ENCODE measurements at regions of chr20 and their contacts with region 1.

Region 1: GRCh38 chr20:561437-562231 is 18.0 kb upstream of the CSNK2A1 start:
- DNase-seq: peak; percentile 78
- CTCF ChIP-seq: peak; percentile 91

Region 2: DNA sequence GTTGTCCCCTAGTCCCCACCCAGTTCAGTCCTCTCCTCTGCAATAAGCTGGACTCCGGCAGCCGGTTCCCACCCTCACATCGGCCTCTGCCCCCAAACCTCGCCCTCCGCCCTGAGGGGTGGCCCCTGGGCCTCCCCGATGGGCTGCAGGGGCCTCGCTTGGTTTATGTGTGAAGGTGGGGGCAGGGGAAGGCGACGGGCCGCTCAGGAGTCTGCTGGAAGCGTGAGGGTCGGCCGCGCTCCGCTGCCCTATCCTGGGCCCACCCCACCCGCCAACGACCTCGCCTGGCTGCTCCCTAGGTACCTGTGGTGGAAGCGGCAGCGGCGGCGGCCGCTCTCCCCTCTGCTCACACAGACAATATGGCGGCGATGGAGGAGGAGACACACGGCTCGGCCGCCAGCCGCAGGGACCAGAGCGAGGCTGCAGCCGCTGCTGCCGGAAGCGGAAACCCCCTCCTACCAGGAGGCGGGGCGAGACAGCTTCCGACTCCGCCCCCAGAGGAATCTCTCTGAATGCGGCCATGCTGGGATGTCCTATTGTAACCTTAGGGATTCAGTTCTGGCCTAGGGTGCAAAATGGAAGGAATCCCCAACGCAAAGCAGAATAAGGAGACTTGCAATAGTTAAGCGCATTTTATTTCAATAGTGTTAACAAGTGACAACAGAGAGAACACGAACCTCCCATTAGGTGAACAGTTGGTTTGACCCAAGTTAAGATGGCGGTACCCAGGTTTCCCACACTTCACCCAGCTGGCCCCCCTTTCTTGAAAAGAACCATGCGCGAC is 18.1 kb before region 1 on chr20 and contains the start of gene CSNK2A1:
- CTCF ChIA-PET with region 1: interaction called, 63 read pairs
- POLR2A ChIA-PET with region 1: no interaction called
- DNase-seq: peak; percentile 95
- CTCF ChIP-seq: no peak

Region 3: DNA sequence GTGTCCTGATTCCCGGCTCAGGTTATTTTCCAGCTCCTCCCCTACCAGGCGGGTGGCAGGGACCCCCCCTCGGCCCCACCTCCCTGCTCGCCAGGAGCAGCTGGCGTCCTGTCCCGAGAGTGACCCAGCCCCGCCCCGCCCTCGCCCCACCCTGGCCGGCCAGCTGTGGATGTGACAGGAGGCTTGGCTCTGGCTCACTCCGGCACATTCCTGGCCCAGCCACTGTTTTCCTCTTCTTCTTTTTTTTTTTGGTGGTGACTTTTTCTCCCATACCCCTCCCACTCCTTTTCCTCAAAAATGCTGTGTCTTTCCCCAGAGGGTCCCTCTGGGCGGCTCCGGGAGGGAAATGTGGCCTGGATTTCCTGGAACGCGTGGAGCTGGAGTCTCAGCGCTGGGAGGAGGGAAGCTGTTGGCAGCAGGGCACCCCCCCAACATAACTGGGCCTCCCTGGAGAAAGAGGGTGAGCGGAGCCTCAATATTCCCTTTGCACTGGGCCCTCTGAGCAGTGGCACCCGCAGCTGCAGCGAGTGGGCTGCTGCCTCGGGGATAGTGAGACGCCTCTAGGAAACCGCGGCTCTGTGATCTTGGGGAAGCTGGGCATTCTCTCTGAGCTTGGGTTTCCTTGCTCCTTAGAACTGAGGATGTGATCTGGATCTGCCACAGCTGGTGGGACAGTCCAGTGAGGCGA is 10.3 kb after region 1 on chr20:
- CTCF ChIA-PET with region 1: interaction called, 24 read pairs
- POLR2A ChIA-PET with region 1: no interaction called
- DNase-seq: no peak
- CTCF ChIP-seq: no peak

Region 4: DNA sequence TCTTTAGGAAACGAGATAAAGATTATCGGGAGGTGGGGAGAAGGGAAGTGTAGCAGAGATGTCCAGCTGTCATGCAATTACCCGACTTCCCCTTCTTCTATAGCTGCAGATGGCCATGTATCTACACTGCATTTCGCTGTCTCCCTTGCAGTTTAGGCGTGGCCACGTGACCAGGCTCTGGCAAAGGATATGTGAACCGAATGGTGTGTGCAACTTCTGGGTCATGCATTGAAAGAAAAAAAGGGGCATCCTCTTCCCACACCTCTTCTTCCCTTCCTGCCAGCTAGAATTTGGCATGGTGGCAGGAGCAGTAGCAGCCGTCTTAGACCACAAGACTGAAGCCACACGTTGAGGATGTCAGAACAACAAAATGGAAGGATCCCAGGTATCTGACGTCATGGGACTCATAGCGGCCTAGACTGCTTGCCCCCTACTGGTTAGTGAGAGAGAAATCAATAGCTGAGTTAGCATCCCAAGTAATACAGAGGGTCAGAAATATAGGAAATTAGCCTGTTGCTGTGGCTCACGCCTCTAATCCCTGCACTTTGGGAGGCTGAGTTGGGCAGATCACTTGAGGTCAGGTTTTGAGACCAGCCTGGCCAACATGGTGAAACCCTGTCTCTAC is 15.6 kb after region 1 on chr20:
- CTCF ChIA-PET with region 1: interaction called, 24 read pairs
- POLR2A ChIA-PET with region 1: no interaction called
- DNase-seq: no peak
- CTCF ChIP-seq: no peak

Region 5: DNA sequence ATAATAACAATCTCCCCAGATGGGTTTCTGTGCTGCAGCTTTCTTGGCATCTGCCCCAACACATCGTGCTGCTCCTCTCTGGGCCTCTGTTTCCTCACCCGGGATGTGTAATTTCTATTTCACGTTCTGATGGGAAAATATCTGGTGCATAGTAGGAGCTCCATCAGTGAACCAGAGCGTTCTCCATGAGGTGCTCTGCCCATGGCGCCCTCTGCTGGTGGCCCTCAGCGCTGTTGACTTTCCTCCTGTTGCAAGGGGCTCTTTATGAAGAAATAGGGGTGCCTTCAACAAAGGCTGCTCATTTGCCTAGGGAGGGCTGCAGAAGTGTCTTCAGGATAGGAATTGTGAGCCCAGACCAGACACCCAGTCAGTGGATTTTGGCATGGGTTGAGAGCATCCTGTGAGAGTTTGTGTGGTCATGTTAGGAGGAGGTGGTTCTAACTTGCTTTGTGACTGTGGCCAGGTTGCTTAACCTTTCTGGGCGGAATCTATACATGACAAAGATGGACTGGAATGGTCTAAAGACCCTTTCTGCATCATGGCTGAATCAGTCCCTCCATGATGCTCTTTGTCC is 105.8 kb after region 1 on chr20:
- CTCF ChIA-PET with region 1: interaction called, 35 read pairs
- POLR2A ChIA-PET with region 1: no interaction called
- DNase-seq: peak; percentile 70
- CTCF ChIP-seq: peak; percentile 83

Region 6: DNA sequence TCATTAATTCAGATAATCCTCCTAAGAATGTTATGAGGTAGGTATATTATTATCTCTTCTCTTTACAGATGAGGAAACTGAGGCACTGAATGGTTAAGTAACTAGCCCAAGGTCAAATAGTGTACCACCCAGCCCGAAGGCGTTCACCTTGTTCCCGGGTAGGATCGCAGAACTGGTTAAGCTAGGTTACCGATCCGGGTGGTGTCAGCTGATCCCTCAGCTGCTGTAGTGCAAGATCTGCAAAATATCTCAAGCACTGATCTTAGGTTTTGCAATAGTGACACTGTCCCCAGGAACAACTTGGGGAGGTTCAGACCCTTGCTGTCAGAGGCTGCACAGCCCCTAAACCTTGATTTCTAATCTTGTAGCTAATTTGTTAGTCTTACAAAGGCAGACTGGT is 178.5 kb after region 1 on chr20:
- CTCF ChIA-PET with region 1: interaction called, 16 read pairs
- POLR2A ChIA-PET with region 1: no interaction called
- DNase-seq: no peak
- CTCF ChIP-seq: no peak

Region 7: GRCh38 chr20:910870-911770 is 349.5 kb after region 1 on chr20:
- CTCF ChIA-PET with region 1: no interaction called
- POLR2A ChIA-PET with region 1: no interaction called
- DNase-seq: no peak
- CTCF ChIP-seq: no peak